Activated CD4-positive, alpha-beta memory T cell treated with anti-CD3 and anti-CD28 coated beads for 36 hours (primary cell): ENCODE measurements at regions of chr15 and their contacts with region 1.

Region 1: DNA sequence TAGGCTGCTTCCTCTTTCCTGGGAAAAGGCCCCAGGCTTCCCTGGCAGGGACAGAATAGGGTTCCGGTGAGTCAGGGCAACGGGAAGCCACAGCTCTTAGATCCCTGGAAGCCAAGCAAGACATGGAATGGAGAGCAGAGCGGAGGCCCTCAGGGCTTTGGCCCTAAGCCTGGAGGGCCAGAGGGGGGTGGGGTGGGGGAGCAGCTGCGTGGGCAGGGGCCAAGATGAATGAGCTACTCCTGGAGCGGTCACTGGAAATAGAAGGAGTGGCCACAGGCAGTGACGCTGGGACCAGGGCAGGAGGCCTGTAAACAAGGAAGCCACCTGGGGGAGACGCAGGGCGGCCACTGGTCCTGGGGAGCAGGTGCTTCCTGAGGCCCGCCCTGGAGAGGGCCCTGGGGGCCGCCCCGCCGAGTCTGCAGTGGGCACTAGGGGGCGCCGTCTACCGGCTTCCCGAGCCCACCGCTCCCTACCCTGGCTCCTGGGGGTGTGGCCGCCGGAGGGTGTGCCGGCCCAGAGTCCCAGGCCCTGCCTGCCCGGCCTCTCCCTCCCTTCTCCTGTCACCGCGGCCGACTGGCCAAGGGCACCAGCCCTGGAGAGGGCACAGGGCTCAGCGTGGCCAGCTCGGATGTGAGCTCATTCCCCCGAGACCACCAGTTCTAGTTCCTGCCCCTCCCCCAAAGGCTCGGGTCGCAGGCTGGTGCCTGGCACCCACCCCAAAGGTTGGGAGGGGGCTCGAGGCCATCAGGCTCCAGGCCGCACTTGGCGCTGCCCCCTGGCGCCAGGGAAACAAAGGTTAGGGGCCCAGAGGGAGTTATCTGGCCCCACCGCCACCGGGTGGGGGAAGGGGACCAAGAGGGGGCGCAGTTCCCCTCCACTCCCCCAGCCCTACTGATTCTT is 12.1 kb downstream of the VPS18 start:
- DNase-seq: peak; percentile 88
- H3K4me3 Mint-ChIP-seq: peak overlapping the region; percentile 77
- H3K27ac Mint-ChIP-seq: no peak overlapping the region
- H3K4me1 Mint-ChIP-seq: peaks cover 17% of the 10 kb centered on the region
- H3K27me3 Mint-ChIP-seq: no peaks in the 10 kb centered on the region

Region 2: GRCh38 chr15:40763801-40764732 is 142.3 kb before region 1 on chr15 and contains the start of gene GCHFR:
- CTCF ChIA-PET with region 1: no interaction called
- POLR2A ChIA-PET with region 1: no interaction called
- intact Hi-C with region 1: no loop called
- DNase-seq: peak; percentile 82
- H3K4me3 Mint-ChIP-seq: peak within 1 kb of the TSS; percentile 63
- H3K27ac Mint-ChIP-seq: peak within 1 kb of the TSS; percentile 79
- H3K4me1 Mint-ChIP-seq: peaks cover 31% of the 10 kb centered on the region
- H3K27me3 Mint-ChIP-seq: no peaks in the 10 kb centered on the region
- total RNA-seq, gene GCHFR: 36.0 to 40.2 TPM

Region 3: DNA sequence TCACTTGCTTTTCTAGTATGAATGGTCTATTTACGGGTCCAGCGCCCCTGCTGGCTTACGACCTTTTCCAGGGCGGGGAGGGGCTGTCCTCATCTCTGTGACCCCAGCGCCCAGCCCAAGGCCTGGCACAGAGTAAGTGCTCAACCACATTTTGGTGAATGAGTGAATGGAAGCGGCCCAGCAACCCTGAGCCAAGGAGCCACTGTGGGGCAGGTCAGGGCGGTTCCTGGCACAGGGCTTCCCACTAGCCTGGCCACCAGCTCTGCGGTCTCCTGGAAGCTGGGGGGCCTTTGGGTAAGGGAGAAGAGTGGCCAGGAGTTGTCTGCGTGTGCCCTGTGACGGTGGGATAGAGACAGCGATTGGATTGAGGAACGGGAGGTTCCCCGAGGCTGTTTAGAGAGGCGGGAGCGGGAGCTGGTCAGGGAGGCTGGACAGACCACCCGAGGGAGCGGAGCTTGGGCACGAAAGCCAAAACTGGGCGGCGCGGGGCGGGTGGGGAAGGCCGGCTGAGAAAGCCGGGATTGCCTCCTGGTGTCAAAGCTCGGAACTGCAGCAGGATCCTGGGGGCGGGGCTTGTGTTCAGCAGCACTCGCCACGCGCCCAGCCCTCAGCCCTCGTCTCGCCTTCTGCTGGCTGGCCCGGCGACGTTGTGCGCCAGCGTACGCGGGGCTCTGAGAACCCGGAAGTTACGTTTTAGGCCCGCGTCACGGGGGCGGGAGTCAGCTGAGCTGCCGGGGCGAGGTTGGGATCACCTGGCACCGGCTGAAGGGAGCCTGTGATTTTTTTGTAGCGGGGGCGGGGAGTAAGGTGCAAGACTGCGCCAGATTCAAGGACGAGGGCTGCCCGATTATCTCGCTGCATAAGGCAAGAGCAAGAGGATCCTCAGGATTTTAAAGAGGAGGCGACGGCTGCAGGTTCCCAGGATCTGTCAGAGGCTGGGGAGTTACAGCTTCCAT is 12.3 kb before region 1 on chr15 and contains the start of gene VPS18:
- CTCF ChIA-PET with region 1: interaction called, 103 read pairs
- POLR2A ChIA-PET with region 1: interaction called, 15 read pairs
- intact Hi-C with region 1: no loop called
- DNase-seq: peak; percentile 99
- H3K4me3 Mint-ChIP-seq: peak within 1 kb of the TSS; percentile 99
- H3K27ac Mint-ChIP-seq: peak within 1 kb of the TSS; percentile 86
- H3K4me1 Mint-ChIP-seq: peaks cover 27% of the 10 kb centered on the region
- H3K27me3 Mint-ChIP-seq: no peaks in the 10 kb centered on the region
- total RNA-seq, gene VPS18: 7.8 to 8.8 TPM

Region 4: DNA sequence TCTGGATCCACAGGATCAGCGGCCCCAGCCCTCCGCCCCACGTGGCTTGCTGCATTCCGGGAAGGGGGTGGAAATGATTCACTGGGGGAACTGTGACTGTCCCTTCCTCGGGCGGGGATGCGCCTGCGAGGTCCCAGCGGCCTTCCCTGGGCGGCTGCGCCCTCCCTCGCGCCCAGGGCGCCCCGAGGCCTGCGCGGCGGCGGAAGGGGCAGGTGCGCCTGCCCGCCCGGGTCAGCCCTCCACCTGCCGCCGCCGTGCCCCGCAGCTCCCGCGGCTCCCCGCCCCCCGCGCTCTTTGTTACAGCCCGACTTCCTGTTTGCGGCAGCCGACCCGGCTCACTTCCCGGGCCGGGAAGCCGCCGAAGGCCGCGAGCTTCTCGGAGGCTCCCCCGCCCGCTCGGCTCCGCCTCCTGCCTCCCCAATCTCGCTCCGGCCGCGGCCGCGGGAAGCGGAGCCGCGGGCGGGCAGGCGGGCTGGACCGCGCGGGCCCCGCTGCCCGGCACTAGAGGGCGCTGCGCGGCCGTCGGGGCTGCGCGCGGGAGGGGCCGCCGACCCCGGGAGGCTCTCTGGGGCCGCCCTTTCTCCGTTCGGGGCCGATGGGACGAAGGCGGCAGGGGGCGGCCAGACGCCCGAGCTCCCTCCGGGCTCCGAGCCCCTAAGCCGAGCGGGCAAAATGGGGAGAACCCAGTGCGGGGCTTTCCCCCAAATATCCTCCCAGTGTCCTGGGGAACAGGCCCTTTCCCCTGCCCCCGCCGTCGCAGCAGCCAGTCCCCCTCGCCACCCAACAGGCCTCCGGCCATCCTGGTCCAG is 35.4 kb after region 1 on chr15:
- CTCF ChIA-PET with region 1: interaction called, 41 read pairs
- POLR2A ChIA-PET with region 1: interaction called, 9 read pairs
- intact Hi-C with region 1: no loop called
- DNase-seq: peak; percentile 76
- H3K4me3 Mint-ChIP-seq: peak overlapping the region; percentile 77
- H3K27ac Mint-ChIP-seq: peak overlapping the region; percentile 61
- H3K4me1 Mint-ChIP-seq: peaks cover 31% of the 10 kb centered on the region
- H3K27me3 Mint-ChIP-seq: no peaks in the 10 kb centered on the region

Region 5: GRCh38 chr15:41022487-41023090 is 116.2 kb after region 1 on chr15:
- CTCF ChIA-PET with region 1: interaction called, 69 read pairs
- POLR2A ChIA-PET with region 1: no interaction called
- intact Hi-C with region 1: loop called (anchors 1 kb)
- DNase-seq: peak; percentile 49
- H3K4me3 Mint-ChIP-seq: no peak overlapping the region
- H3K27ac Mint-ChIP-seq: no peak overlapping the region
- H3K4me1 Mint-ChIP-seq: no peaks in the 10 kb centered on the region
- H3K27me3 Mint-ChIP-seq: no peaks in the 10 kb centered on the region

Region 6: GRCh38 chr15:41180206-41180789 is 274.0 kb after region 1 on chr15:
- CTCF ChIA-PET with region 1: interaction called, 101 read pairs
- POLR2A ChIA-PET with region 1: no interaction called
- intact Hi-C with region 1: loop called (anchors 1 kb)
- DNase-seq: no peak
- H3K4me3 Mint-ChIP-seq: no peak overlapping the region
- H3K27ac Mint-ChIP-seq: no peak overlapping the region
- H3K4me1 Mint-ChIP-seq: no peaks in the 10 kb centered on the region
- H3K27me3 Mint-ChIP-seq: no peaks in the 10 kb centered on the region

Region 7: GRCh38 chr15:41331833-41332787 is 425.8 kb after region 1 on chr15 and contains the start of gene OIP5:
- CTCF ChIA-PET with region 1: no interaction called
- POLR2A ChIA-PET with region 1: no interaction called
- intact Hi-C with region 1: loop called (anchors 1 kb)
- DNase-seq: peak; percentile 99
- H3K4me3 Mint-ChIP-seq: peak within 1 kb of the TSS; percentile 99
- H3K27ac Mint-ChIP-seq: peak within 1 kb of the TSS; percentile 97
- H3K4me1 Mint-ChIP-seq: peaks cover 23% of the 10 kb centered on the region
- H3K27me3 Mint-ChIP-seq: no peaks in the 10 kb centered on the region
- total RNA-seq, gene OIP5: 11.1 to 13.0 TPM